AG04450 (cell line): ENCODE measurements at regions of chr14 and their contacts with region 1.

Region 1: DNA sequence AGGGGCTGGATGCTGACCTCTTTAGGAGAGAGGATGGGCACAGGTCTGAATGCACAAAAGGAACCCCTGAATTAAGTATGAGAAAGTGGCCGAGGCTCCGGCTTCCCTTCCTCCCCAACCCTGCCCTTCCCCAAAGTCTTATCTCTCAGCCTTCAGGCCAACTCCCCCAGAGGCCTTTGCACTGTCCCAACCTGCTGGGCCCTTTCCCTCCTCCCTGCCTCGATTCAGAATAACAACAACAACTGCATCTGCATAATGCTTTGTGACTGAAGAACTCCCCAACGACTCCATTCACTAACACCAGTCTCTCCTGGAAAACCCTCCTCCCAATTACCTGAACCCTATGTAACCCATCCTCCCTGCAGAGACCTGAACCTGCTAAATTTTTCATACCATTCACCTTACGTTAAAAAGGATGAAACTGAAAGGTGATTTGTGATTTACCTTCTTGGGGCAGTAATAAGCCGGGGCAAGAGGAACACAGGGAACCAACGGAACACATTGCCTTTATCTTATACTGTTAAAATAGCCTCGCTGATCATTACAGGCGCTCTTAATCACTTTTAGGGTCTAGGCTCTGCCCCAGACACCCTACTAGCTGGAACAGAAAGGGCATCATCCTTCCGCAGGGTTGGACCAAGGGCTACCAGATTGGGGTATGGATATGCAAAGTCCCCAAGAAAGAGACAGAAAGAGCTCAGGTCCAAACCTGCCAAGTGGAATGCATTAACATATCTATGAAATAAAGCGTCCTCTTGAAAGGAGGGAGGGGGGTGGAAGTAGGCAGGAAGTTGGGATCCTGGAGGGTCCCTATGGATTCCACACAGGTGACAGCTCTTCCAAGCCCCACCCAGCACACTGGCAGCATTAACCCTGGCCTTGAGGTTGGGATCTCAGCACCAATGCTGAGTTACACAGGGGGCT is 24.2 kb upstream of the FOXN3 start:
- DNase-seq: no peak
- H3K4me3 ChIP-seq: no peak overlapping the region
- H3K27ac ChIP-seq: no peak overlapping the region
- H3K27me3 ChIP-seq: no peaks in the 10 kb centered on the region
- CTCF ChIP-seq: no peak

Region 2: GRCh38 chr14:89249065-89249695 is 192.1 kb before region 1 on chr14:
- CTCF ChIA-PET with region 1: no interaction called
- POLR2A ChIA-PET with region 1: no interaction called
- DNase-seq: no peak
- H3K4me3 ChIP-seq: no peak overlapping the region
- H3K27ac ChIP-seq: no peak overlapping the region
- H3K27me3 ChIP-seq: no peaks in the 10 kb centered on the region
- CTCF ChIP-seq: no peak

Region 3: GRCh38 chr14:89489761-89490437 is 48.7 kb after region 1 on chr14:
- CTCF ChIA-PET with region 1: no interaction called
- POLR2A ChIA-PET with region 1: interaction called, 10 read pairs
- DNase-seq: no peak
- H3K4me3 ChIP-seq: peak overlapping the region; percentile 32
- H3K27ac ChIP-seq: peak overlapping the region; percentile 73
- H3K27me3 ChIP-seq: no peaks in the 10 kb centered on the region
- CTCF ChIP-seq: no peak